SK-N-SH (cell line): ENCODE measurements at regions of chr6 and their contacts with region 1.

Region 1: DNA sequence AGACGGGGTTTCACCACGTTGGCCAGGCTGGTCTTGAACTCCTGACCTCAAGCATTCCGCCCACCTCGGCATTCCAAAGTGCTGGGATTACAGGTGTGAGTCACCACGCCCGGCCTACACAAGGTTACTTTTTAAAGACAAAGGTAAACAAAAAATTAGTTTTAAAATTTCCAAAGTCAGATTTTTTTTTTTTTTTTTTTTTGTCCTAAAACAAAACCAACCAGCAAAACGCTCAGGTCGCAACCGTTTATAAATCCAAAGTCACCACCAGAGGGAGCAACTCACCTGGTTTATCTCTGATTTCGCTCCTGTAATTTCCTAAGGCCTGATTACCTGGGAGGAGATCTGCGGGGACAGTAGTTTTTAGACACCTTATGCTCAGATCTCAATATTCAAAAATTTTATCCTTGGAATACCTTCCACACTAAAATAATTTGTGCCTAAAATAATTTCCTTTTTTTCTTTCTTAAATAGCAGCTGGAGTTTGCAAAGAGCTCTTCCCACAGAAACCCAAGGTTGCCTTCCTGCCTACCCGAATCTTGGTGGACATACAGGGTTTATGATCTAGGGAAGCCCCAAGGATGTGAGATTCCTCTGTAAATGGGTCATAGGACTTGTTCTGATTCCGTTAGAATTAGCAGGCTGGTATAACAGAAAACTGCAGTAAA is 19.8 kb upstream of the TREM1 start:
- DNase-seq: peak; percentile 54
- H3K4me3 ChIP-seq: no peak overlapping the region
- H3K27ac ChIP-seq: no peak overlapping the region
- H3K4me1 ChIP-seq: no peaks in the 10 kb centered on the region
- H3K27me3 ChIP-seq: peaks cover 29% of the 10 kb centered on the region; the same call in 1 of the 2 replicates
- CTCF ChIP-seq: peak; percentile 74
- EP300 ChIP-seq: no peak
- RAD21 ChIP-seq: peak; percentile 68

Region 2: GRCh38 chr6:41092421-41093140 is 213.7 kb before region 1 on chr6:
- CTCF ChIA-PET with region 1: interaction called, 10 read pairs
- POLR2A ChIA-PET with region 1: no interaction called
- DNase-seq: peak; percentile 36
- H3K4me3 ChIP-seq: no peak overlapping the region
- H3K27ac ChIP-seq: no peak overlapping the region
- H3K4me1 ChIP-seq: peaks cover 4 to 9% of the 10 kb centered on the region in 2 experiments; a peak in 3 of 4 replicates
- H3K27me3 ChIP-seq: no peaks in the 10 kb centered on the region
- CTCF ChIP-seq: peak; percentile 61
- EP300 ChIP-seq: no peak
- RAD21 ChIP-seq: peak; percentile 54

Region 3: GRCh38 chr6:41111036-41111435 is 195.3 kb before region 1 on chr6:
- CTCF ChIA-PET with region 1: no interaction called
- POLR2A ChIA-PET with region 1: no interaction called
- DNase-seq: no peak
- H3K4me3 ChIP-seq: no peak overlapping the region
- H3K27ac ChIP-seq: no peak overlapping the region
- H3K4me1 ChIP-seq: no peaks in the 10 kb centered on the region
- H3K27me3 ChIP-seq: no peaks in the 10 kb centered on the region
- CTCF ChIP-seq: no peak
- EP300 ChIP-seq: no peak
- RAD21 ChIP-seq: no peak

Region 4: DNA sequence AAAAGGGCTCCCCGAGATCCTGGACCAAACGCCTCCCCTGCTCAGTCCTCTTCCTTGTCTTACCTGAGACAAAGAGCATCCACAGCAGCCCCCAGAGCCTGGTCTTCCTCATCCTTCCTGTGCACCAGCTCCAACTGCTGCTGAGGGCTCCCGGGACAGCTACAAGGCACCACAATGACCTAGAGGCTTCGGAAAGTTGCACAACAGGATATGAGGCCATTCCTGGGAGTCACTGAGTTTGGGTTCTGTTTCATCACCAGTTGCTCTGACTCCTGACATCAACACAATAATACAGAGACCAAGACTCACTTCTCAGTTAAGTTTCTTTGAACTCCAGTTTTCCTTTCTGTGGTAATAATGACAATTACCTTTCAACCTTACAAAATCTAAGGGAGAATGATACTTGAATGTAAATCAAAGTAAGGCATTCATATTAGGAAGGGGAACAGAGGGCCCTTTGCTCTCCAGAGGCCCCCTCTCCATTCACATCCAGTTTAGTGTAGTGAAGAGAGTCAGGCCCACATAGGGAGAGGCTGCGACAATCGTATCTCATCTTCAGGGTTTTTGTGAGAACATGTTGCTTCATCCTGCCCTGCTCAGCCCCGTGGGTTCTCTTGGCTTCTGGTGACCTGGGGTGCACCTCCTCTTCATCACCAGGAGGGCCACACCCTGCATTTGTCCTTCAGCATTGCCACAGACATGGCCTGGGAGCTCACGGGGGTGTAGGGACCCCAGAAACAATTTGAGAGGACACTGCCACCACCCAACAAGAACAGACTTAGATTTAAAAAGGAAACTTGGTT is 19.6 kb before region 1 on chr6 and contains the start of gene TREM1:
- CTCF ChIA-PET with region 1: interaction called, 10 read pairs
- POLR2A ChIA-PET with region 1: no interaction called
- DNase-seq: no peak
- H3K4me3 ChIP-seq: no peak within 1 kb of the TSS
- H3K27ac ChIP-seq: no peak within 1 kb of the TSS
- H3K4me1 ChIP-seq: no peaks in the 10 kb centered on the region
- H3K27me3 ChIP-seq: no peaks in the 10 kb centered on the region; the same call in 1 of the 2 replicates
- CTCF ChIP-seq: no peak
- EP300 ChIP-seq: no peak
- RAD21 ChIP-seq: no peak
- polyA plus RNA-seq, gene TREM1: not detected in 2 replicates

Region 5: GRCh38 chr6:41318654-41319565 is 12.6 kb after region 1 on chr6:
- CTCF ChIA-PET with region 1: interaction called, 50 read pairs
- POLR2A ChIA-PET with region 1: no interaction called
- DNase-seq: peak; percentile 84
- H3K4me3 ChIP-seq: peak overlapping the region; percentile 28 to 60
- H3K27ac ChIP-seq: no peak overlapping the region
- H3K4me1 ChIP-seq: peaks cover 0 to 2% of the 10 kb centered on the region in 2 experiments; a peak in 1 of 4 replicates
- H3K27me3 ChIP-seq: peaks cover 20% of the 10 kb centered on the region
- CTCF ChIP-seq: peak; percentile 97
- EP300 ChIP-seq: no peak
- RAD21 ChIP-seq: peak; percentile 88

Region 6: DNA sequence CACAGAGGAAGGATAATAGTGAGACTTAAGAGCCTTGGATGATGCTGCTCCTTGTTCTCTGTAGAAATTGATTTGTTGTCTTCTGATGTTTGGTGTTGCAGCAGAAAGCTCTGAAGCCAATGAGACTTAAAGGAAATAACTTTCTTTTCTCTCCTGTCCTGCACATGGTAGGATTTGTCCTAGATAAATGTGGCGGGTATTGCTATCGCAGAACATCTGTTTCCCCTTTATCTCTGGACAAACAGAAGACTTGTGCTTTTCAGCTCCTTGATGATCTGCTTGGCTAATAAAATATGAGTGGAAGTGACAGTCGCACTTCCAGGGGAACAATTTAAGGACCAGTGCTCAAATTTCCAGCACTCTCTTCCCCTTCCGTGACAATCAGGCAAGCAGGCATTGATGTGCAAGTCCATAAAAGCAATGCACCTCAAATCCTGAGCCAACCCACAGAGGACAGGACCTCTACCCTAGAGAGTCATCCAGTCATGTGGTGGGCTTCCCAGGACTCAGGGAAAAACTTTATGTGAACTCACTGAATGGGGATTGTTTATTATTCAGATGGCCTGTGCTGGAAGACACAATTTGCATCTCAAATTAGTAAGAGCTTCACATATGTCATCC is 19.2 kb after region 1 on chr6:
- CTCF ChIA-PET with region 1: interaction called, 50 read pairs
- POLR2A ChIA-PET with region 1: no interaction called
- DNase-seq: no peak
- H3K4me3 ChIP-seq: no peak overlapping the region
- H3K27ac ChIP-seq: no peak overlapping the region
- H3K4me1 ChIP-seq: no peaks in the 10 kb centered on the region
- H3K27me3 ChIP-seq: no peaks in the 10 kb centered on the region; the same call in 1 of the 2 replicates
- CTCF ChIP-seq: no peak
- EP300 ChIP-seq: no peak
- RAD21 ChIP-seq: no peak

Region 7: GRCh38 chr6:41334482-41335040 is 28.2 kb after region 1 on chr6:
- CTCF ChIA-PET with region 1: interaction called, 15 read pairs
- POLR2A ChIA-PET with region 1: no interaction called
- DNase-seq: peak; percentile 41
- H3K4me3 ChIP-seq: no peak overlapping the region
- H3K27ac ChIP-seq: no peak overlapping the region
- H3K4me1 ChIP-seq: peaks cover 0 to 7% of the 10 kb centered on the region in 2 experiments; a peak in 2 of 4 replicates
- H3K27me3 ChIP-seq: peaks cover 9% of the 10 kb centered on the region
- CTCF ChIP-seq: no peak
- EP300 ChIP-seq: no peak
- RAD21 ChIP-seq: peak; percentile 24; the same call in 1 of the 2 replicates